ENCODE measurements at regions of chr1 and their contacts with region 1.

Region 1: GRCh38 chr1:55650444-55650843 is 435.3 kb upstream of the USP24 start:
- DNase-seq: no peak
- ATAC-seq: no peak
- H3K4me3 ChIP-seq: no peak overlapping the region
- H3K27ac ChIP-seq: no peak overlapping the region
- H3K4me1 ChIP-seq: no peaks in the 10 kb centered on the region
- H3K27me3 ChIP-seq: no peaks in the 10 kb centered on the region

Region 2: GRCh38 chr1:55353707-55354620 is 296.5 kb before region 1 on chr1:
- intact Hi-C with region 1: no loop called
- DNase-seq: no peak
- ATAC-seq: no peak
- H3K4me3 ChIP-seq: no peak overlapping the region
- H3K27ac ChIP-seq: no peak overlapping the region
- H3K4me1 ChIP-seq: no peaks in the 10 kb centered on the region
- H3K27me3 ChIP-seq: no peaks in the 10 kb centered on the region

Region 3: DNA sequence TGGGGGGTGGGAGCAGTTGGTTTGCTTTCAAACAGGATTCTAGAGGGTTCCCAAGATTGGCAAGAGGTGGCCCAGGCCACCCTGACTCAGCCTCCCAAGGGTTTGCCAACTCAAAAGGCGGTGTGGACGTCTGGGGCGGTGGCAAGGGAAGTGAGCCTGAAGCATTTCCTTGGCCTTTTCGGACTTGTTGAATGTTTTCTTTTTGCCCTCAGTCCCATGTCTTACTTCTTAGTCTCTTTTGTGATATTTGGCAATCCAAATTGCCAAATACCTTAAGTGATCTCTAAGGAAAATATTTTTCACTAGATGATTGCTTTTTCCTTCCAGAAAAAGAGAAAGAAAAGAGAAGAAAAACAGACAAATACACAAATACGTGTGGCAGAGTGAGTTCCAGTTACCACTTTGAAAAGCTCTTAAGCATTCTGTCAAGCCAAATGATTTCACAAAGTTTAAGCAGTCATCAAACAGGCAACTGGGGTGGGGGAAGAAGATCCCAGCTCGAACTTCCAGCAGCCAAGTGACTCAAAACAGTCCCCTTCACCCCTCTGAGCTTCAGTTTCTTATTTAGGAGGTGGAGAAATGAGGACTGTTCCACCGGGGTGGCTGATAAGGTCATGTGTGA is 60.7 kb before region 1 on chr1:
- intact Hi-C with region 1: no loop called
- DNase-seq: peak; percentile 85 to 89
- ATAC-seq: peak; percentile 80
- H3K4me3 ChIP-seq: no peak overlapping the region
- H3K27ac ChIP-seq: peak overlapping the region; percentile 94 to 96
- H3K4me1 ChIP-seq: peaks cover 12 to 16% of the 10 kb centered on the region in 2 donors
- H3K27me3 ChIP-seq: no peaks in the 10 kb centered on the region

Region 4: DNA sequence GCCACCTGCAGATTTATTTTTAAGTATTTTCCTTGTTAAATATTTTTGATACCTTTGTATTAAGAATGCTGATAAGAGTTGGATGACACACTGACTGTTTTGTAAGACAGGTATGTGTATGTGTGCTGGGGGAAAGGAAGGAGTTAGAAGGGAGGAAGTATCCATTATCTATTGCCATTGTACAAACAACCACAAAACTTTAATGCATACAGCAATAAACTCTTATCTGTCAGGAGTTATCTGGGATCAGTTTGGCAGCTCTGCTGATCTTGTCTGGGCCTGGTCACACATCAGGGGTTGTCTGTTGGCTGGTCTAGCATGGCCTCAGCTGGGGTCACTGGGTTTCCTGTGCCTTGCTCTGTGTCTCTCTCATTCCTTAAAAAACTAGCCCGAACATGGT is 11.4 kb before region 1 on chr1:
- intact Hi-C with region 1: loop called in 1 of 2 experiments (anchors 2 kb)
- DNase-seq: no peak
- ATAC-seq: no peak
- H3K4me3 ChIP-seq: no peak overlapping the region
- H3K27ac ChIP-seq: no peak overlapping the region
- H3K4me1 ChIP-seq: peaks cover 5 to 15% of the 10 kb centered on the region in 2 donors
- H3K27me3 ChIP-seq: no peaks in the 10 kb centered on the region

Region 5: GRCh38 chr1:56081173-56081572 is 430.7 kb after region 1 on chr1:
- intact Hi-C with region 1: no loop called
- DNase-seq: peak in 1 of 2 donors; percentile 48
- ATAC-seq: peak; percentile 22
- H3K4me3 ChIP-seq: no peak overlapping the region
- H3K27ac ChIP-seq: no peak overlapping the region
- H3K4me1 ChIP-seq: no peaks in the 10 kb centered on the region
- H3K27me3 ChIP-seq: no peaks in the 10 kb centered on the region